ENCODE measurements at regions of chr3 and their contacts with region 1.

Region 1: DNA sequence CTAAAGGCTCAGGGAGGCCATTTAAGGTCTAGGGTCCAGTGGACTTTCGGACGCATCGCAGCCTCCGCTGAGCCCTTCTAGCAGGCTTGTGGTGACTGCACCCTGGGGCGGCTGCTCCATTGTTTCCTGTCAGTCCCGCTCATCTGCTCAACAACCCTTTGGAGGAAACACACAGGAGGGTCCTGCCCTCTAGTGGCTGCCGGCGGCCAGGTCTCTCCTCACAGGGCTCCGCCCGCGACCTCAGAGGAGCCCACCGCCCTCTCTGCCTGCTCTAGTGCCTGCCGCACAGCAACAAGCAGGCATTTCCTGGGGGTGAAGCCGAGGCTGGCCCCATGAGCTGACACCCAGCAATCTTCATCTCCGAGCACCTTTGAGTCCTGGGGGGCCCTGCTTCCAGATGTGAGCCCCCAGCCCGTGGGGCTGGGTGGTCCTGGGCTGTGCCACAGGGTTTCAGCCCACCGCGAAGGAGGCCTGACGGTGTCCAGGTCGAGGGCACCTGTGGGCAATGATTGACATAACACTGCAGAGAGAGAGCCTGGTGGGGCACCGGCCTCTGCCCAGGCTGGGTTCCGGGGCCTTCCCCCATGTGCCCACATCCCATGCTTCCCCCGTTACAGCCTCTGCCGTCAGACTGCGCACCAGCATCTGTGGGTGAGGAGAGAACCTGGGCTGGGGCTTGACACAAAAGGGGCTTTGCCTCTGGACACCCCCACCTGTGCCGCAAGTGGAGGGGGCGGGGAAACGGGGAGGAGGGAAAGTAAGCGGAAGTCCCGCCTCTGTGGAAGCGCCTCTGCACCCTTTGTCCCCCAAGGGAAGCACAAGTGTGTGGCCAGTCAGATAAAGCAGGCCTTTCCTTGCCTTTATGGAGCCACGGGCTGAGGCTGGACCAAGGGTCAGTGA is 27.0 kb upstream of the SFMBT1 start:
- DNase-seq: peak; percentile 87 to 90
- H3K4me3 ChIP-seq: peak overlapping the region; percentile 51
- H3K4me3 Mint-ChIP-seq: peak overlapping the region; percentile 76
- H3K27ac Mint-ChIP-seq: peak overlapping the region; percentile 50
- H3K4me1 ChIP-seq: peaks cover 11% of the 10 kb centered on the region
- H3K4me1 Mint-ChIP-seq: peaks cover 8% of the 10 kb centered on the region
- H3K27me3 ChIP-seq: no peaks in the 10 kb centered on the region
- H3K27me3 Mint-ChIP-seq: no peaks in the 10 kb centered on the region
- CTCF ChIP-seq: peak; percentile 90 to 96

Region 2: DNA sequence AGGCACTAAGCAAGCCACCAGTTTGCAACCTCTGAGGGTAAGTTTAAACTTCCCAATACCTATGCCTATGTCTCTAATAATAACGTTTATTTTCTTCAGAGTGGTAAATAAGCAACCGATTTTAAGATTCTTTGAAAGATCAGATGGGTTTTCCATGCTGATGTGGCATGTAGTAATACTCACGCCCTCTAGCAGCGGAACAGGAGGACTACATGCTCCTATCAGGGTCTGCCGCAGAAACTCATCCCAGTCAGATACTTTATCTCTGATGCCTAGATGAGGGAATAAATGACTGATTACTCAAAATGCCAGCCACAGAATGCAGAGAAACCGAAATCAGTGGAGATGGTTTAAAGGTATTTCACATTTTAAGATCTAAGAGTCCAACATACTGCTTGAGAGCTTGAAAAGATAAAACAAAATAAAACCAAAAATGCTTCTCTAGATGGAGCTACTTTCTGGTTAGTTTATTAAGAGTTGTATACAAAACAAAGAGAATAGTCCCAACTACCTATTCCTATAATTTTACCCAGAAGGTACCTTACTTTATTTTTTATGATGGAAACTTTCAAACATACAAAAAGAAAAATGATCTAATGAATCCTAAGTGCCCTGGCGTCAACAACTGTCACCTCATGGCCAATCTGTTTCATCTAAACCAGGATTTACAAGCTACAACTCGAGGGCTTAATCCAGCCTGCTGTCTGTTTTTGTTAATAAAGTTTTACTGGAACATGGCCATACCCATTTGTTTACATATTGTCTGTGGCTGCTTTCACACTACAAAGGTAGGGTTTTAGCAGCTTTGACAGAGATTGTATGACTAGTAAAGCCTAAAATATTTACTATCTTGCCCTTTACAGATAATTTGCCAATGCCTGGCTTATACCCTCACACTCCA is 138.0 kb before region 1 on chr3:
- CTCF ChIA-PET with region 1: no interaction called
- POLR2A ChIA-PET with region 1: no interaction called
- intact Hi-C with region 1: loop called (anchors 1 kb)
- DNase-seq: peak; percentile 51 to 52
- H3K4me3 ChIP-seq: no peak overlapping the region
- H3K4me3 Mint-ChIP-seq: no peak overlapping the region
- H3K27ac Mint-ChIP-seq: no peak overlapping the region
- H3K4me1 ChIP-seq: no peaks in the 10 kb centered on the region
- H3K4me1 Mint-ChIP-seq: no peaks in the 10 kb centered on the region
- H3K27me3 ChIP-seq: no peaks in the 10 kb centered on the region
- H3K27me3 Mint-ChIP-seq: no peaks in the 10 kb centered on the region
- CTCF ChIP-seq: peak; percentile 69 to 87